ENCODE measurements at regions of chr2 and their contacts with region 1.

Region 1: GRCh38 chr2:113273027-113273551 is 5.6 kb downstream of the PAX8 start:
- DNase-seq: peak in 4 of 9 experiments; percentile 17 to 63 (median 42)
- ATAC-seq: peak; percentile 97
- H3K4me3 ChIP-seq: no peak overlapping the region
- H3K4me3 Mint-ChIP-seq: peak overlapping the region; percentile 49
- H3K27ac ChIP-seq: no peak overlapping the region
- H3K27ac Mint-ChIP-seq: no peak overlapping the region
- H3K4me1 ChIP-seq: peaks cover 39% of the 10 kb centered on the region
- H3K4me1 Mint-ChIP-seq: peaks cover 30% of the 10 kb centered on the region
- H3K27me3 ChIP-seq: peaks cover 23 to 34% of the 10 kb centered on the region in 2 experiments
- H3K27me3 Mint-ChIP-seq: peaks cover 53% of the 10 kb centered on the region
- CTCF ChIP-seq: peak; percentile 13

Region 2: DNA sequence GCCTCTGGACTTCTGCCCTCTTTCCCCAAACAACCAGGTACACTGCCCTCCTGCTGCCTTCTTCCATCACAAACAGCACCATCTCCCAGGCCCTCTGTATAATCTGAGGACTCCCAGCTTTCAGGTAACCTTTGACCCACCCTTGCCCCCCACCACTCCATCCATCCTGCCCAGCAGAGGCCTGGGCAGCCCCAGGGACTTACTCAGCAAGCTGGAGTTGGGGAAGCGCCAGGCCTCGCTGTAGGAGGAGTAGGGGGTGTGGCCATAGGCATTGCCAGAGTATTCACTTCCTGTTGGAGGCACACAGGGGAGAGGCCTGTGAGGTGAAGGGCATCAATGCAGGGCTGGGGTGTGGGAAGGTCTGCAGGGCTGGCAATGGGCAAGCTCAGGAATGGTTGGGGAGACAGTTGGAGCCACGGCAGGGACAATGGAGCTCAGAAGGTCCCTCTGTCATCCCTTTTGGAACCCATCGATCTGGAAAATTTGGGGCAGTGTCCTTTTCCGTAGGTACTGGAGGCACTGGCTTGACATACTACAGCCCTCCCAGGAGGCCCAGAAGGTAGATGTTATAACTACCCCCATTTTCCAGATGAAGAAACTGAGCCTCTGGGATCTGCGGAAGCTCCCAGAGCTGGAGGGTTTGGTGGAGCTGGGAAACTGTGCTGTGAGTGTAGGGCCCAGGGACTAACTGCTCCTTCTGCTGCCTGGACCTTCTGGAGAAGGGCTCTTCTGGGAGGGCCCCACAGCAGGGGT is 53.0 kb before region 1 on chr2:
- CTCF ChIA-PET with region 1: no interaction called
- POLR2A ChIA-PET with region 1: no interaction called
- intact Hi-C with region 1: loop called in 1 of 2 experiments (anchors 1 kb)
- DNase-seq: no peak
- ATAC-seq: no peak
- H3K4me3 ChIP-seq: no peak overlapping the region
- H3K4me3 Mint-ChIP-seq: no peak overlapping the region
- H3K27ac ChIP-seq: no peak overlapping the region
- H3K27ac Mint-ChIP-seq: no peak overlapping the region
- H3K4me1 ChIP-seq: peaks cover 17% of the 10 kb centered on the region
- H3K4me1 Mint-ChIP-seq: peaks cover 19% of the 10 kb centered on the region
- H3K27me3 ChIP-seq: no peaks in the 10 kb centered on the region
- H3K27me3 Mint-ChIP-seq: peaks cover 2% of the 10 kb centered on the region
- CTCF ChIP-seq: no peak